IMR-90 (cell line): ENCODE measurements at regions of chr3 and their contacts with region 1.

Region 1: GRCh38 chr3:63911873-63912767 is at the start of gene SCAANT1:
- DNase-seq: peak; percentile 90
- ATAC-seq: peak; percentile 86
- H3K4me3 ChIP-seq: peak within 1 kb of the TSS; percentile 98
- H3K27ac ChIP-seq: peak within 1 kb of the TSS; percentile 97
- H3K4me1 ChIP-seq: peaks cover 7% of the 10 kb centered on the region
- H3K27me3 ChIP-seq: no peaks in the 10 kb centered on the region
- CTCF ChIP-seq: peak; percentile 16; the same call in 1 of the 2 replicates
- POLR2A ChIP-seq: peak; percentile 80
- RAD21 ChIP-seq: no peak; the same call in 1 of the 2 replicates
- total RNA-seq, gene SCAANT1: not detected in 2 replicates

Region 2: DNA sequence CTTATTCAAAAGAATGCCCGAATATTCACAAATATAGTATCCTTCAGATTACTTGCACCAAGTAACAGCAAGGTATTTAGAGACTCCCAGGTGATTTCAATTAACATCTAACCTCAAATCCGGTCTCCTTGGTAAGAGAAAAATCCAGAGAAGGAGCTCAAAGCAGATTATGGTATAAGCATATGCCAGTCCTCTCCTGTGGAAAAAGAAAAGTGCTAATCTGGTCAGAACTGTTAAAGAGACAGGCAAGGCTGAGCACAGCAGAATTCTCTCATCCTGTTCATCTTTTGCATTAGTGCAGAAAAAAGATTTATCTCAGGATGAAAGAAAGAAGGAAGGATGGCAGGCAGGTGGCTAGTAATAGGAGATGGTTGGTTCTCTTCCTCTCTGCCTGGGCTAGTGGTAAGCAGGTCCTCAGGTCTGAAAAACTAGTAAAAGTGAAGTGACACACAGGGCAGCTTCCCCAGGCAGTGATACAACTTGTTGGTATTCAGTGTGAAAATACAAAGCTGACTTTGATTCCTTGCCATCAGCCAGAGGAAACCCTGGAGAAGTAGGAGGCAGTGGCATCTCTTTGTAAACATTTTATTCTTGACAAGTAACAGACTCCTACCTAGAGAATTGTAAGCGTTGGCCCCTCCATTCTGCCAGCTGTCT is 34.3 kb before region 1 on chr3:
- CTCF ChIA-PET with region 1: no interaction called
- POLR2A ChIA-PET with region 1: no interaction called
- dilution Hi-C with region 1: no loop called
- in situ Hi-C with region 1: no loop called
- intact Hi-C with region 1: loop called (anchors 5 kb)
- DNase-seq: peak; percentile 65
- ATAC-seq: peak; percentile 80
- H3K4me3 ChIP-seq: no peak overlapping the region
- H3K27ac ChIP-seq: no peak overlapping the region
- H3K4me1 ChIP-seq: peaks cover 7% of the 10 kb centered on the region
- H3K27me3 ChIP-seq: no peaks in the 10 kb centered on the region
- CTCF ChIP-seq: no peak
- POLR2A ChIP-seq: no peak
- RAD21 ChIP-seq: no peak

Region 3: DNA sequence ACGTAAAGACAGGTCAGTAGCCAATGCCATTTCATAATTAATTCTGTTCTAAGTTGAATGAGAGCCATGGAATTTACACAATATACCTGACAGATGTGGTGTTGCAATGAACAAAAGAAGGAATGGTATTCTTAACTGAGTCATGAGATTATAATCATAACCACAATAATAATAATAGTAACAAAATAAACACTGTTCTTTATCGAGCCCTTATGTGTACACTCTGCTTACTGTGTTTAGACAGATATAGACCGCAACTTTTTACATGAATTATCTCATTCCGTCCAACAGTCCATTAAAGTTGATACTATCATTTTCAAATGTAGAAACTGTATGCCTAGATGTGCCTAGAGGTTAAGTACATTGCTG is 28.3 kb after region 1 on chr3:
- CTCF ChIA-PET with region 1: no interaction called
- POLR2A ChIA-PET with region 1: no interaction called
- dilution Hi-C with region 1: no loop called
- in situ Hi-C with region 1: no loop called
- intact Hi-C with region 1: no loop called
- DNase-seq: peak; percentile 76
- ATAC-seq: peak; percentile 88
- H3K4me3 ChIP-seq: no peak overlapping the region
- H3K27ac ChIP-seq: no peak overlapping the region
- H3K4me1 ChIP-seq: peaks cover 14% of the 10 kb centered on the region
- H3K27me3 ChIP-seq: no peaks in the 10 kb centered on the region
- CTCF ChIP-seq: no peak
- POLR2A ChIP-seq: no peak
- RAD21 ChIP-seq: no peak

Region 4: DNA sequence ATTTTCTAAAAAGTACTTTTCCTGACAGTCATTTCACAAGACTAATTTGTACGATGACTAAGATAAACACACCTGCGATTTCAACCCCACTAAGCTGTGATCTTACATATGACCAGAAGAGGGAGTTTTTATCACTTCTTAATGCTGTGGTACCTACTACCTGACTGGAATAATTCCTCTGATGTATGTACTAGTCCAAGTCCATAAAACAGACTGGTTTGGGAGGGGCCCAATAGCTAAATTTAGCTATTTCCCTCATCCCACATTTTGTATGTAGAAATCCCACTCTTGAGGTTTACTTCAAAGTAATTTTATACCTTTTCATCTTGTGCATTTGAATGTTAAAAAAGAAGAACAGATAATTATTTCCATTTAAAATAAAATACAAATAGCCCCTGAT is 49.8 kb after region 1 on chr3:
- CTCF ChIA-PET with region 1: interaction called, 3 read pairs
- POLR2A ChIA-PET with region 1: no interaction called
- dilution Hi-C with region 1: no loop called
- in situ Hi-C with region 1: no loop called
- intact Hi-C with region 1: loop called (anchors 5 kb)
- DNase-seq: peak; percentile 68
- ATAC-seq: no peak
- H3K4me3 ChIP-seq: no peak overlapping the region
- H3K27ac ChIP-seq: no peak overlapping the region
- H3K4me1 ChIP-seq: peaks cover 5% of the 10 kb centered on the region
- H3K27me3 ChIP-seq: no peaks in the 10 kb centered on the region
- CTCF ChIP-seq: peak; percentile 58
- POLR2A ChIP-seq: no peak
- RAD21 ChIP-seq: peak; percentile 22; the same call in 1 of the 2 replicates

Region 5: DNA sequence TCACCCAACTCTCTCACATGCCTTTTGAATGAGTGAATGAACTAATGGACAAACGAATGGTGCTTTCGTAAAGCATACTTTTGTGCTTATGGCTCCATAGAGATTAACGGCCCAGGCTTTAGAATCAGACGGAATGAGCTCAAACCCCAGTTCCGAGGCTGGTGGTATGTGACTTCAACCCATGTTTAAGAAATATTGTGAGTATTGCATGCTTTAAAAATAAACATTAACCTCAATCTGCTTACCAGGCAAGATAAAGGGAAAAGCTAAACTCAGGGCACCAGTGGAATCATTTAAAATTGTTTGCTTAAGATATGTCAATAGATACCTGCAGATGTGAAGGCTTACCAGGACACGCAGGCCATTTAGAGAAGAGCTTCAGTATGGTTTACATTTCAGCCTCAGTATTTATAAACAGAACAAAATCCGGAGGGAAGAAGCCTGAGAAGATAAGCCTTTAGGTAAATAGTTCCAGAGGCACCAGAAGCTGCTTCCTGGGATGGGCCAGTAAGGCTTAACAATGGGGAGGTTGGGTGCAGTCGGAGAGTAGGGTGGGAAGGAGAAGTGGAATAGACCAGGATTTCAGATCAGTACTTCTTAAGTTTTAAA is 589.3 kb after region 1 on chr3:
- CTCF ChIA-PET with region 1: no interaction called
- POLR2A ChIA-PET with region 1: no interaction called
- dilution Hi-C with region 1: no loop called
- in situ Hi-C with region 1: no loop called
- intact Hi-C with region 1: loop called (anchors 5 kb)
- DNase-seq: peak; percentile 97
- ATAC-seq: peak; percentile 88
- H3K4me3 ChIP-seq: no peak overlapping the region
- H3K27ac ChIP-seq: peak overlapping the region; percentile 97
- H3K4me1 ChIP-seq: peaks cover 9% of the 10 kb centered on the region
- H3K27me3 ChIP-seq: no peaks in the 10 kb centered on the region
- CTCF ChIP-seq: no peak
- POLR2A ChIP-seq: no peak
- RAD21 ChIP-seq: no peak